GM13977 (cell line): ENCODE measurements at regions of chr3 and their contacts with region 1.

Region 1: GRCh38 chr3:14261229-14261628 is 82.6 kb downstream of the LSM3 start:
- DNase-seq: peak; percentile 82
- CTCF ChIP-seq: peak; percentile 98

Region 2: GRCh38 chr3:14467814-14468620 is 206.8 kb after region 1 on chr3:
- in situ Hi-C with region 1: loop called (anchors 5 kb)
- DNase-seq: peak; percentile 86
- CTCF ChIP-seq: peak; percentile 90

Region 3: GRCh38 chr3:15205934-15206661 is 944.9 kb after region 1 on chr3 and contains the start of gene CAPN7:
- in situ Hi-C with region 1: no loop called
- DNase-seq: peak; percentile 97
- CTCF ChIP-seq: peak; percentile 20